Esophagus muscularis mucosa (tissue), 4 donors: ENCODE measurements at regions of chr2 and their contacts with region 1.

Region 1: GRCh38 chr2:230798769-230799399 is 65.9 kb upstream of the ITM2C start:
- DNase-seq: no peak
- H3K4me3 ChIP-seq: no peak overlapping the region
- H3K27ac ChIP-seq: no peak overlapping the region
- H3K4me1 ChIP-seq: peaks cover 38 to 55% (median 46%) of the 10 kb centered on the region in 4 donors
- H3K27me3 ChIP-seq: no peaks in the 10 kb centered on the region
- CTCF ChIP-seq: peak; percentile 51 to 73 (median 65)
- EP300 ChIP-seq: no peak
- POLR2A ChIP-seq: no peak

Region 2: GRCh38 chr2:230411570-230412370 is 387.1 kb before region 1 on chr2:
- intact Hi-C with region 1: loop called (anchors 10 kb)
- DNase-seq: peak; percentile 92
- H3K4me3 ChIP-seq: peak overlapping the region; percentile 64 to 81 (median 70)
- H3K27ac ChIP-seq: peak overlapping the region; percentile 83 to 92 (median 92)
- H3K4me1 ChIP-seq: peaks cover 46 to 58% (median 49%) of the 10 kb centered on the region in 4 donors
- H3K27me3 ChIP-seq: no peaks in the 10 kb centered on the region
- CTCF ChIP-seq: no peak
- EP300 ChIP-seq: no peak
- POLR2A ChIP-seq: peak; percentile 11

Region 3: GRCh38 chr2:230694241-230694640 is 104.6 kb before region 1 on chr2:
- intact Hi-C with region 1: no loop called
- DNase-seq: no peak
- H3K4me3 ChIP-seq: no peak overlapping the region
- H3K27ac ChIP-seq: no peak overlapping the region
- H3K4me1 ChIP-seq: peaks cover 0 to 9% (median 2%) of the 10 kb centered on the region in 4 donors
- H3K27me3 ChIP-seq: no peaks in the 10 kb centered on the region
- CTCF ChIP-seq: no peak
- EP300 ChIP-seq: no peak
- POLR2A ChIP-seq: no peak

Region 4: GRCh38 chr2:230712443-230713330 is 86.2 kb before region 1 on chr2 and contains the start of gene CAB39:
- intact Hi-C with region 1: loop called (anchors 2 kb)
- DNase-seq: peak; percentile 94
- H3K4me3 ChIP-seq: peak within 1 kb of the TSS; percentile 97 to 99 (median 97)
- H3K27ac ChIP-seq: peak within 1 kb of the TSS; percentile 96 to 98 (median 97)
- H3K4me1 ChIP-seq: peaks cover 30 to 50% (median 44%) of the 10 kb centered on the region in 4 donors
- H3K27me3 ChIP-seq: no peaks in the 10 kb centered on the region
- CTCF ChIP-seq: peak; percentile 89 to 93 (median 92)
- EP300 ChIP-seq: no peak
- POLR2A ChIP-seq: peak; percentile 43
- total RNA-seq, gene CAB39: 73.6 to 105 (median 83.9) TPM

Region 5: GRCh38 chr2:230758566-230759480 is 40.1 kb before region 1 on chr2:
- intact Hi-C with region 1: loop called (anchors 5 kb)
- DNase-seq: no peak
- H3K4me3 ChIP-seq: no peak overlapping the region
- H3K27ac ChIP-seq: peak overlapping the region in 1 of 4 donors; percentile 7
- H3K4me1 ChIP-seq: peaks cover 36 to 48% (median 41%) of the 10 kb centered on the region in 4 donors
- H3K27me3 ChIP-seq: no peaks in the 10 kb centered on the region
- CTCF ChIP-seq: no peak
- EP300 ChIP-seq: no peak
- POLR2A ChIP-seq: no peak